Thyroid gland (tissue), 4 donors: ENCODE measurements at regions of chr12 and their contacts with region 1.

Region 1: GRCh38 chr12:25130741-25131188 is 64.2 kb downstream of the DNAI7 start:
- DNase-seq: no peak
- H3K4me3 ChIP-seq: no peak overlapping the region
- H3K27ac ChIP-seq: no peak overlapping the region
- H3K4me1 ChIP-seq: no peaks in the 10 kb centered on the region
- H3K27me3 ChIP-seq: no peaks in the 10 kb centered on the region
- CTCF ChIP-seq: peak in 4 of 6 experiments; percentile 63 to 84 (median 66)
- POLR2A ChIP-seq: no peak

Region 2: GRCh38 chr12:24991209-24992049 is 139.3 kb before region 1 on chr12:
- intact Hi-C with region 1: loop called (anchors 2 kb)
- DNase-seq: no peak
- H3K4me3 ChIP-seq: no peak overlapping the region
- H3K27ac ChIP-seq: no peak overlapping the region
- H3K4me1 ChIP-seq: no peaks in the 10 kb centered on the region
- H3K27me3 ChIP-seq: no peaks in the 10 kb centered on the region
- CTCF ChIP-seq: peak; percentile 21 to 81 (median 53)
- POLR2A ChIP-seq: no peak